ENCODE measurements at regions of chr7 and their contacts with region 1.

Region 1: DNA sequence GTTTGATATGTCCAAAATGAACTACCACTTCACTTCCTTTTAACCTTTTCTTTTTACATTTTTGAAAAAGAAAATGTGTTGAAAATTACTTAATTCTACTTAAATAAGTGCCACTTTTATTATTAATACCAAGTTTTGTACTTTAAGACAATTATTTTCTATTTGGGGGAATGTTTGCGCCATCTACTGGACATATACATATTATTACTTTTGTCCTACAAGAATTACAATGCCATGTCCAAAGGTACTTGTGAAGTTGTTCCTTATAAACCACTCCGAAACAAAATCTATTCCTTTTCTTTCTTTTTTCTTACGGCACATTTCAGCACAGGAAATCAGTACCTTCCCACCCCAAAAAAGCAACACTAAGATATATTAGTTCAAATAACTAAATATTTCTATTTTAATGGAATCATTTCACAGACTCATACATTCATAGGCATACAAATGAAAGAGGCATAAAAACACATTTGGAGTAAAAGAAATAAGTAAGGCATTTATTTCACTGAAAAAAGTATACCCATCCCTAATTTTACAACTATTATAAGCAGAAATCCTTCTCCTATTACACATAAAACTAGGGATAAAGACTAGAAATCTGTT is 169.9 kb downstream of the RNF133 start:
- DNase-seq: peak; percentile 26
- CTCF ChIP-seq: peak; percentile 35

Region 2: DNA sequence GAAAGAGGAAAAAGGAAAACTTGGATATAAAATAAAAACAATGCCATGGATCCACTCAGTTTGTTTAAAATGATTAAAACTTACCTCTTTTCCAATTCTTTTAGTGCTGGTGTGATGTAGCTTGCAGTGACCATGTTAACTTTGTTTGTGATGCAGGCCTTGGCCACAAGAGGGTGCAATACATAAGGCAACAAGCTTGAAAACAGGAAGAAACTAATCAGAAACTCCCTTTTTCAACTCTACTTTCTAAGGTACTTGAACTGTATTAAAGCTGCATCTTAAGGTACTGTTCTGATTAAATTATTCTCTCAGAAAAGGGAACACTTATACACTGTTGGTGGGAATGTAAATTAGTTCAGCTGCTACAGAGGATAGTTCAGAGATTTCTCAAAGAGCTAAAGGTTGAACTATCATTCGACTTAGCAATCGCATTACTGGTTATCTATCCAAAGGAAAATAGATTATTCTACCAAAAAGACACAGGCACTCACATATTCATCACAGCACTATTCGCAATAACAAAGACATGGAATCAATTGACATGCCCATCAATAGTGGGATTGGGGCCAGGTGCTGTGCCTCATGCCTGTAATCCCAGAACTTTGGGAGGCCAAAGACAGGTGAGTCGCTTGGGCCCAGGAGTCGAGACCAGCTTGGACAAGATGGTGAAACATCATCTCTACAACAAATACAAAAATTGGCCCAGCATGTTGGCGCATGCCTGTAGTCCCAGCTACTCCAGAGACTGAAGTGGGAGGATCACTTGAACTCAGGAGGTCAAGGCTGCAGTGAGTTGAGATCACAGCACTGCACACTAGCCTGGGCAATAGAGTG is 435.8 kb before region 1 on chr7:
- in situ Hi-C with region 1: loop called (anchors 25 kb)
- DNase-seq: peak; percentile 13
- CTCF ChIP-seq: peak; percentile 81

Region 3: DNA sequence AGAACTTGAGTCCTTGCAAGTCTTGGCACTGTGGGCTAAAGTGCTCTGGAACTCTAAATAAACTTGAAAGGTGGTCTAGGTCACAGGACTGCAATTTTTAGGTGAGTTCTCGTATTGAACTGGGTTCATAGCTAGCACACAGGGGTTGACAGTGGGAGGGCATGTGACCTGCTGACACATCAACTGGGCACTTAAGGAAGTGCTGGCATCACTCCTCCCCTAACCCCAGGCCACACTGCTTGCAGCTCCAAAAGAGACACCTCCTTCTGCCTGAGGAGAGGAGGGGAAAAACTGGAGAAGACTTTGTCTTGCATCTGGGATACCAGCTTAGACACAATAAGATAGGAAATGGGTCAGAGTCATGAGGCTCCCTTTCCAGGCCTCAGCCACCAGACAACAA is 346.9 kb before region 1 on chr7:
- in situ Hi-C with region 1: no loop called
- DNase-seq: no peak
- CTCF ChIP-seq: no peak

Region 4: GRCh38 chr7:122219253-122219865 is 309.6 kb before region 1 on chr7:
- in situ Hi-C with region 1: loop called (anchors 25 kb)
- DNase-seq: no peak
- CTCF ChIP-seq: peak; percentile 21

Region 5: GRCh38 chr7:122430710-122431109 is 98.3 kb before region 1 on chr7:
- in situ Hi-C with region 1: no loop called
- DNase-seq: no peak
- CTCF ChIP-seq: no peak